Mammary epithelial cell (primary cell): ENCODE measurements at regions of chr3 and their contacts with region 1.

Region 1: DNA sequence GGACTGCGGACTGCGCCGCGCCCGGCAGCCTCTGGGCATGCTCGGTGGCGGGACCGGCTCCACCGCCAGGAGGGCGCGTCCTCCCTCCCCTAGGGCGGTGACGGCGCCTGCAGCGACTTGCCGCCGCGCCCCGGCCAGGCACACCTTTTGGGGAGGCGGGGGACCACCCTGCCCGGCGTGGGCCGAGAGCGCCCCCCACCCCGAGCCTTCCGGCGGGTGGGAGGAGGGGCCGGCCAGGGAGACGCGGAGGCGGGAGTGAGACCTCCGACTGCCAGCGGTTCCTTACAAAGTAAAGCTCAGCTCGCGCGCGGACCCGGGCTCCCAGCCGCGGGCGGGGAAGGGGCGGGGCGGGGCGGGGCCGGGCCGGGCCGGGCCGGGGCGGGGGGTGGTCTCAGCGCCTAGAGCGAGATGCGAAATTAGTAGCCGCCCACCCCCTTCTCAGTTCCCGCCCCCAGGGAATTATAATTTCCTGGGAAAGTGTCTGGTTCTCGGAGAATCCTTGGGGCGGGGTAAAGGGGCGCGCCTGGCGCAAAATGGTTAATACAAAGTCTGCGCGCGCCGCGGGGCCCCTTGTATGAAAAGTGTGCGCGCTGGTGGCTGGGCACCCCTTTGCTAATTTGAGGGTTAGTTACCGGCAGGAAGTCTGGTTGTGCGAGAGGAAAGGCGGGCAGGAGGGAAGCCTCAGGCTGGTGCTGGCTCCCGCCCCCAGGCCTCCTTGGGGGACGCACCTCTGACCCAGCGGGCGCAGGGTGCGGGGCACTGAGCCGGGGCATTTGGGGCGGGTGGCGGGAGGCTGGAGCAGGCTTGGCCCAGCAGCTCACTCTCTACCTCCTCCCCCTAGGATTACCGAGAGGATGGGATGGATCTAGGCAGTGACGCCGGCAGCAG is 224.8 kb upstream of the IL12A start:
- DNase-seq: peak; percentile 93
- H3K4me3 ChIP-seq: peak overlapping the region; percentile 59 to 82 (median 71)
- H3K27ac ChIP-seq: peak overlapping the region; percentile 93
- H3K4me1 ChIP-seq: peaks cover 51% of the 10 kb centered on the region
- H3K27me3 ChIP-seq: no peaks in the 10 kb centered on the region
- CTCF ChIP-seq: peak in 1 of 2 donors; percentile 24

Region 2: DNA sequence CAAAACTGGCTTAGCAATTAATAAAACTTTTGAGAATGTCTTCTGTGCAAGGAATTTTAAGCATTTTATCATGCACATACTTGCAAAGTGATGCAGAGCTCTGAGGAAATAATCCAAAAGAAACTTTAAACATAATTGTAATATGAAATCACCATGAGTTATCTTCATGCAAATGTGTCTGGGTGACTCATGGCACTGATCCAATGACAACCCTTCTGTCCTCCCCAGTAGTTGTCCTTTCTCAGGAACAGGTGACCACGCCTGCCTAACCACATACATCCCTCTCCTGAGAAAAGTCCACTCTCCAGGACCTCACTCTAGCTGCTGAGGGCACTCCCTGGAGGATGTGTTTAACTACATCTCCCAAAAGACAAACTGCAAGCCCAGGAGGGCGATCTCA is 305.8 kb before region 1 on chr3:
- CTCF ChIA-PET with region 1: no interaction called
- dilution Hi-C with region 1: no loop called
- in situ Hi-C with region 1: no loop called
- intact Hi-C with region 1: loop called (anchors 10 kb)
- DNase-seq: peak; percentile 97
- H3K4me3 ChIP-seq: no peak overlapping the region
- H3K27ac ChIP-seq: peak overlapping the region; percentile 66
- H3K4me1 ChIP-seq: peaks cover 28% of the 10 kb centered on the region
- H3K27me3 ChIP-seq: no peaks in the 10 kb centered on the region
- CTCF ChIP-seq: peak in 1 of 2 donors; percentile 5

Region 3: DNA sequence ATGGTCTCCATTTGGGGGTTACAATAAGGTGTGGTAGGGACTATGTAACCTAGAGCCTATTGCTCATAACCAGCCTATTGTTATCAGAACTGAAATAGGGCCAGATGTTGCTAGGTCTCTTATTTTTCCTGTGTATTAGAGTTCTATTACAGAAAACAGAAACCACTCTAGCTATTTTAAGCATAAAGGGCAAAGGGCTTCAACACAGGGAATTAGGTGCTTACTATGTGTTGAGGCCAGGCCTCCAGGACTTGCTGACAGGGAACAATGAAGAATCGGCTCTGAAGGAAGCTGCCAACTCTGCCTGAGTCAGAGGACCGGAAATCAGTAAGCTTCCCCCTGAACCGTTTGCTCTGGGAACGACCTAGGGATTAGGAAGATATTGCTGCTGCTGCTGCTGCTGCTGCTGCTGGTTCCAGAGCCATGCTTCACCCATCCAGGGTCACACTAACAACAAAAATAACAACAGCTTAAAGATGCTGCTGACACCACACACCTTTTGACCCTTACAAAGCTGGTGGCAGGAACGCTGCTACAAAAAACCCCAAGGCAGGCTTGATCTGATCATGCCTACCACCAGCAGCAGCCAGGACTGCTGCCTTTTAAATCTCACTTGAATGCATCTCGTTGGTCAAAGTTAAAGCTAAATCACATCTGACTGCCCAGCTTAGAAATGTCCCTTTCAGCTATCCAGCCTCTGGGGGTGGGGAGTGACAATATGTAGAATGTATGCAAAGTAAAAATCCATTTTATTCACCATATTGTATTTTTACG is 52.1 kb before region 1 on chr3:
- CTCF ChIA-PET with region 1: no interaction called
- dilution Hi-C with region 1: no loop called
- in situ Hi-C with region 1: no loop called
- intact Hi-C with region 1: no loop called
- DNase-seq: peak; percentile 65
- H3K4me3 ChIP-seq: no peak overlapping the region
- H3K27ac ChIP-seq: peak overlapping the region; percentile 35
- H3K4me1 ChIP-seq: peaks cover 10% of the 10 kb centered on the region
- H3K27me3 ChIP-seq: no peaks in the 10 kb centered on the region
- CTCF ChIP-seq: no peak

Region 4: GRCh38 chr3:159726231-159726964 is 37.4 kb before region 1 on chr3:
- CTCF ChIA-PET with region 1: interaction called, 3 read pairs
- dilution Hi-C with region 1: no loop called
- in situ Hi-C with region 1: no loop called
- intact Hi-C with region 1: loop called (anchors 1 kb)
- DNase-seq: peak; percentile 87
- H3K4me3 ChIP-seq: no peak overlapping the region
- H3K27ac ChIP-seq: peak overlapping the region; percentile 69
- H3K4me1 ChIP-seq: peaks cover 32% of the 10 kb centered on the region
- H3K27me3 ChIP-seq: no peaks in the 10 kb centered on the region
- CTCF ChIP-seq: no peak

Region 5: GRCh38 chr3:159798951-159799350 is 35.1 kb after region 1 on chr3:
- CTCF ChIA-PET with region 1: interaction called, 5 read pairs
- dilution Hi-C with region 1: no loop called
- in situ Hi-C with region 1: no loop called
- intact Hi-C with region 1: loop called (anchors 1 kb)
- DNase-seq: peak; percentile 73
- H3K4me3 ChIP-seq: no peak overlapping the region
- H3K27ac ChIP-seq: peak overlapping the region; percentile 65
- H3K4me1 ChIP-seq: peaks cover 34% of the 10 kb centered on the region
- H3K27me3 ChIP-seq: no peaks in the 10 kb centered on the region
- CTCF ChIP-seq: no peak

Region 6: GRCh38 chr3:159852821-159853505 is 89.1 kb after region 1 on chr3:
- CTCF ChIA-PET with region 1: no interaction called
- dilution Hi-C with region 1: no loop called
- in situ Hi-C with region 1: no loop called
- intact Hi-C with region 1: loop called (anchors 10 kb)
- DNase-seq: peak; percentile 66
- H3K4me3 ChIP-seq: peak overlapping the region; percentile 4 to 39 (median 30)
- H3K27ac ChIP-seq: peak overlapping the region; percentile 91
- H3K4me1 ChIP-seq: peaks cover 52% of the 10 kb centered on the region
- H3K27me3 ChIP-seq: no peaks in the 10 kb centered on the region
- CTCF ChIP-seq: no peak

Region 7: DNA sequence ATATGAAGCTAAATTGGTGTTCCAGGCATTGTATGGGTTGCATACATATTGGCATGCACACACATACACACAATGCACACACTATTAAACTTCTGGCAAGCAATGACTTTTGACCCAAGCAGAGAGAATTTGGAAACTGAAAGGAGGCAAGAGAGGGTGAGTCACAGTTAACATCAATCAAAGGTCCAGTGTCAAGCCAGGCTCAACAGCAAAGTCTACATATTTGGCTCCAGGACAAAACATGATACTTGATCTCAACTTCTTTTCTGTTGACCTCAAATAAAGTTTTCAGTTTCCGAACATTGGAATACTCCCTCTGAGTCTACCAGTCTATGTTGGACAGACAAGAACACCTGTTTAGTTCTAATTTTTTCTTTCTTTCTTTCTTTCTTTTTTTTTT is 253.1 kb after region 1 on chr3:
- CTCF ChIA-PET with region 1: no interaction called
- dilution Hi-C with region 1: no loop called
- in situ Hi-C with region 1: no loop called
- intact Hi-C with region 1: no loop called
- DNase-seq: no peak
- H3K4me3 ChIP-seq: no peak overlapping the region
- H3K27ac ChIP-seq: no peak overlapping the region
- H3K4me1 ChIP-seq: no peaks in the 10 kb centered on the region
- H3K27me3 ChIP-seq: peaks cover 3% of the 10 kb centered on the region
- CTCF ChIP-seq: no peak